ENCODE measurements at regions of chr17 and their contacts with region 1.

Region 1: GRCh38 chr17:58082870-58083490 is at the start of gene DYNLL2:
- DNase-seq: peak; percentile 93
- H3K4me3 ChIP-seq: peak within 1 kb of the TSS; percentile 95 to 96
- H3K27ac ChIP-seq: peak within 1 kb of the TSS; percentile 66 to 91
- H3K4me1 ChIP-seq: peaks cover 19% of the 10 kb centered on the region
- H3K27me3 ChIP-seq: no peaks in the 10 kb centered on the region
- CTCF ChIP-seq: no peak
- POLR2A ChIP-seq: no peak
- total RNA-seq, gene DYNLL2: 33.6 to 36.7 TPM

Region 2: DNA sequence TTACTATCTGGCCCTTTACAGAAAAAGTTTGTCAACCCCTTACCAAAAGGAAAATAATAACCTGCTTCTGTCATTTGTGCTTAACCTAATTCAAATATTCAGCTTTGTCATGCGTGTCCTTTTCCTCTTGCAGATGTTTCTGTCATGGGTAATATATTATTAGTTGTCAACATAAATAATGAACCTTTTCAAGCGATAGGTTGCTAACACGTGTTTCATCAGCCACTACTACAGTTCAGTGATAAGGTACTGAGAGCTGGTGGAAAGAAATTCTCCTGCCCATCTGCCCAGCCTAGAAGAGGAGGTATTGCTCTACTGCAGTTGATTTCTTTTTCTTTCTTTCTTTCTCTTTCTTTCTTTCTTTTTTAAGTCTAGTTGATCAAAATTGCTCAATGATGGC is 63.9 kb before region 1 on chr17:
- intact Hi-C with region 1: loop called (anchors 10 kb)
- DNase-seq: no peak
- H3K4me3 ChIP-seq: no peak overlapping the region
- H3K27ac ChIP-seq: no peak overlapping the region
- H3K4me1 ChIP-seq: no peaks in the 10 kb centered on the region
- H3K27me3 ChIP-seq: no peaks in the 10 kb centered on the region
- CTCF ChIP-seq: no peak
- POLR2A ChIP-seq: no peak

Measured in testis (tissue), 5 donors.